Caco-2 (cell line): ENCODE measurements at regions of chr2 and their contacts with region 1.

Region 1: DNA sequence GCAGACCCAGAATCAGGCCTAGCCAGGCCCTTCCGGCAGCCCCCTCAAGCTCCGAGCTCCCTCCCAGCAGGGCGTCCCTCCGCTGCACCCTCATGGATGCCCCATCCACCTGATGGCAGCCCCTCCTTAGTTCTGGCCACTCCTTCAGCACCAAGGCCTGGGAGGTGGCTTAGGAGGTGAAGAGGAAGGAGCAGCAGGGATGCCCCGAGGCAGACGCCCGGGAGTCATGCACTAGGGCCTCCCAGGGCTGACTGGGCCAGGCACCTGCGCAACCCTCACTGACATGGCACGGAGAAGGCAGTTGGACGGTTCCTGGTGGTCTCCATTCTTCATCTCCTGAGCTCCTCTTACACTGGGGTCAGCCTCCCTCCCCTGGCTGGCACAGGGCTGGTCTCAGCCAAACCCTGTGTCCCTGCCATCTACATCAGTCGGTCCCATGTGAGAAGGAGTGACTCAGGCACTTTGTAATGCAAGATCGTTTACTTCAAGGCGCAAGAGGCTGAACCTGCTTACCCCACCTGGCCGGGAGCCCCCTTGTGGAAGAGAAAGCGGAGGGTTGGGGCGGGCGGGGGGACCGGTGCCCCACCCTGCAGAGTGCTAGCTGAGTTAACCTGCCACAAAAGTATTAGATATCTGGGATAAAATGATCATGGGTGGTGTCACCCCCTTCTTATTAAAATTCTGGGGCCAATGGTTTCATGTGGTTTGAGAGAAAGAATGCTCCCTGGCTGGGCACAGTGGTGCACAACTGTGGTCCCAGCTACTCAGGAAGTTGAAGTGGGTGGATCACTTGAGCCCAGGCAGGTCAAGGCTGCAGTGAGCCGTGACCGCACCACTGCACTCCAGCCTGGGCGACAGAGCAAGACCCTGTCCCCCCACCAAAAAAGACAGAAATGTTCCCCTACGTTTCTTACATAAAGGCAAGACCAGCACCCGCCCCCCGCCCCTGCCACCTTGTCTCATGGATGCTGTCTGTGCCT is 53.3 kb upstream of the ID2 start:
- DNase-seq: no peak
- H3K4me3 ChIP-seq: no peak overlapping the region
- H3K4me3 Mint-ChIP-seq: peak overlapping the region; percentile 51
- H3K27ac Mint-ChIP-seq: peak overlapping the region; percentile 65
- H3K4me1 ChIP-seq: peaks cover 90% of the 10 kb centered on the region
- H3K4me1 Mint-ChIP-seq: peaks cover 31% of the 10 kb centered on the region
- H3K27me3 ChIP-seq: no peaks in the 10 kb centered on the region
- H3K27me3 Mint-ChIP-seq: no peaks in the 10 kb centered on the region
- CTCF ChIP-seq: peak in 1 of 2 experiments; percentile 4

Region 2: GRCh38 chr2:7427293-7428060 is 1201.0 kb before region 1 on chr2:
- CTCF ChIA-PET with region 1: interaction called, 3 read pairs
- POLR2A ChIA-PET with region 1: no interaction called
- intact Hi-C with region 1: loop called (anchors 1 kb)
- DNase-seq: peak in 1 of 2 experiments; percentile 62
- H3K4me3 ChIP-seq: no peak overlapping the region
- H3K4me3 Mint-ChIP-seq: no peak overlapping the region
- H3K27ac Mint-ChIP-seq: no peak overlapping the region
- H3K4me1 ChIP-seq: no peaks in the 10 kb centered on the region
- H3K4me1 Mint-ChIP-seq: no peaks in the 10 kb centered on the region
- H3K27me3 ChIP-seq: no peaks in the 10 kb centered on the region
- H3K27me3 Mint-ChIP-seq: peaks cover 11% of the 10 kb centered on the region
- CTCF ChIP-seq: peak; percentile 61 to 77

Region 3: DNA sequence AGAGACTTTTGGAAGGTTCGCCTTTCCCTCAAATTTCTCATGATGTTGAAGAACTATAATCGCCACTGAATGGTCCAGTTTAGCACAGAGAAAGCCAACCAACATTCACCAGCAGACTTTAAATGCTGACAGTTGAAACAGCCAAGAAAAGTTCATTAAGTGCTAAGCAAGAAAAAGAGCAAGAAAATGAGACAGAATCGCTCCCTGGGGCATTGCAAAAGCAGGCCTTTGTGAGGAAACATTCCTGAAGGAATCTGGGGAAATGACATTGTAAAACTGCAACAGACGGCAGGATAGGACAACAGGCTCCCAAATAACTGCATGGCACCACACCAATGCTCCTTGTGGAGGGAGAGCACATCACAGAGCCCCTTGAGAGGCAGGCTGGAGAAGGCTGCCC is 215.9 kb before region 1 on chr2:
- CTCF ChIA-PET with region 1: no interaction called
- POLR2A ChIA-PET with region 1: no interaction called
- intact Hi-C with region 1: loop called (anchors 1 kb)
- DNase-seq: peak in 1 of 2 experiments; percentile 23
- H3K4me3 ChIP-seq: no peak overlapping the region
- H3K4me3 Mint-ChIP-seq: peak overlapping the region; percentile 30
- H3K27ac Mint-ChIP-seq: peak overlapping the region; percentile 79
- H3K4me1 ChIP-seq: peaks cover 37% of the 10 kb centered on the region
- H3K4me1 Mint-ChIP-seq: peaks cover 27% of the 10 kb centered on the region
- H3K27me3 ChIP-seq: no peaks in the 10 kb centered on the region
- H3K27me3 Mint-ChIP-seq: no peaks in the 10 kb centered on the region
- CTCF ChIP-seq: no peak

Region 4: GRCh38 chr2:8525582-8526402 is 102.7 kb before region 1 on chr2:
- CTCF ChIA-PET with region 1: interaction called, 6 read pairs
- POLR2A ChIA-PET with region 1: no interaction called
- intact Hi-C with region 1: loop called (anchors 1 kb)
- DNase-seq: peak; percentile 71 to 76
- H3K4me3 ChIP-seq: no peak overlapping the region
- H3K4me3 Mint-ChIP-seq: no peak overlapping the region
- H3K27ac Mint-ChIP-seq: peak overlapping the region; percentile 62
- H3K4me1 ChIP-seq: peaks cover 15% of the 10 kb centered on the region
- H3K4me1 Mint-ChIP-seq: peaks cover 18% of the 10 kb centered on the region
- H3K27me3 ChIP-seq: no peaks in the 10 kb centered on the region
- H3K27me3 Mint-ChIP-seq: no peaks in the 10 kb centered on the region
- CTCF ChIP-seq: peak; percentile 53 to 62

Region 5: DNA sequence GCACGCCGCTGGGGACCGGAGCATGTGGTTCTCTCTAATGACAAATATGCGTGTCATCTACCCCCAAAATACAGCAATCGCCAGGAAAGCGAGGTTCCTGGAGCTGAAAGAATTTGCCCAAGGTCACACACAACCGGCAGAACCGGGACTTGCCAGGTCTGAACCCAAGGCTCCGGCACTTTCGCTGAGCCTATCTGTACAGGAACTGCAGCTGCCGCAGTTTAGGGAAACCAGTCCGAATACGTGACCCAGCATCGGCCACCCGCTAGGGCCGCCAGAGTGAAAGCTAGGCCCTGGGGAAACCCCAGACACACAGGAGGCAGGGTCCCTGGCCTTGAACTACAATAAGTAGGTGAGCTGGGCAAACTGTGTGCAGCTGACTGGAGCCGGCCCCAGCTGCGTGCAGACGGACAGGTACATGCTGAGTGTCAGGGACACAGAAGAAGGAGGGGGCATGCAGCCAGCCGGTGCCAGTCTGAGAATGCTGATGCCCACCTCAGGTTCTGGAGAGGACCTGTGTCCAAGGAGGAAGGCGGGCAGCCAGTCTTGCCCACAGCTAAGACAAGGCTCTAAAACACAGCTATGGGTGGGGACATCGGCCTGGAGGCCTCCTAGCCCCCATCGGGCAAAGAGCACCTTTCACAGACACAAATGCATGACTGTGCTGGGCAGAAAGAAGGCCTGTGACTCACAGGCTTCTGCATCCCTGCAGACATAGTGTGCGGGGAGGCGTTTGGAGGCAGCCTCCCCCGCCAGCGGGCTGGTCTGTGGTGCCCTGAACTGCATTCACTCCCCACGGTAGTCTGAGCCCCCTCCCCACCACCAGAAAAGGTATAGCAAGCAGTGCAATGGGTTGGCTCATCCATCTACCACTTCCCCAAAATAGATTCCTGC is 54.1 kb before region 1 on chr2:
- CTCF ChIA-PET with region 1: no interaction called
- POLR2A ChIA-PET with region 1: interaction called, 3 read pairs
- intact Hi-C with region 1: loop called (anchors 1 kb)
- DNase-seq: peak in 1 of 2 experiments; percentile 65
- H3K4me3 ChIP-seq: no peak overlapping the region
- H3K4me3 Mint-ChIP-seq: peak overlapping the region; percentile 49
- H3K27ac Mint-ChIP-seq: peak overlapping the region; percentile 96
- H3K4me1 ChIP-seq: peaks cover 40% of the 10 kb centered on the region
- H3K4me1 Mint-ChIP-seq: peaks cover 45% of the 10 kb centered on the region
- H3K27me3 ChIP-seq: no peaks in the 10 kb centered on the region
- H3K27me3 Mint-ChIP-seq: no peaks in the 10 kb centered on the region
- CTCF ChIP-seq: no peak

Region 6: GRCh38 chr2:8656160-8656641 is 27.7 kb after region 1 on chr2:
- CTCF ChIA-PET with region 1: no interaction called
- POLR2A ChIA-PET with region 1: no interaction called
- intact Hi-C with region 1: loop called (anchors 1 kb)
- DNase-seq: no peak
- H3K4me3 ChIP-seq: no peak overlapping the region
- H3K4me3 Mint-ChIP-seq: no peak overlapping the region
- H3K27ac Mint-ChIP-seq: peak overlapping the region; percentile 13
- H3K4me1 ChIP-seq: peaks cover 5% of the 10 kb centered on the region; the same call in 1 of the 2 replicates
- H3K4me1 Mint-ChIP-seq: peaks cover 8% of the 10 kb centered on the region
- H3K27me3 ChIP-seq: no peaks in the 10 kb centered on the region
- H3K27me3 Mint-ChIP-seq: no peaks in the 10 kb centered on the region
- CTCF ChIP-seq: no peak

Region 7: GRCh38 chr2:9178904-9179571 is 550.5 kb after region 1 on chr2:
- CTCF ChIA-PET with region 1: no interaction called
- POLR2A ChIA-PET with region 1: no interaction called
- intact Hi-C with region 1: no loop called
- DNase-seq: peak; percentile 51 to 69
- H3K4me3 ChIP-seq: no peak overlapping the region
- H3K4me3 Mint-ChIP-seq: peak overlapping the region; percentile 72
- H3K27ac Mint-ChIP-seq: peak overlapping the region; percentile 99
- H3K4me1 ChIP-seq: peaks cover 44% of the 10 kb centered on the region
- H3K4me1 Mint-ChIP-seq: peaks cover 44% of the 10 kb centered on the region
- H3K27me3 ChIP-seq: no peaks in the 10 kb centered on the region
- H3K27me3 Mint-ChIP-seq: no peaks in the 10 kb centered on the region
- CTCF ChIP-seq: no peak